ENCODE measurements at regions of chr3 and their contacts with region 1.

Region 1: GRCh38 chr3:16906682-16907081 is 21.9 kb downstream of the PLCL2 start:
- DNase-seq: peak in 1 of 6 donors; percentile 62
- ATAC-seq: peak; percentile 74 to 96 (median 89)
- H3K4me3 ChIP-seq: no peak overlapping the region
- H3K27ac ChIP-seq: peak overlapping the region in 2 of 4 donors; percentile 43 to 68
- H3K4me1 ChIP-seq: peaks cover 11 to 33% (median 27%) of the 10 kb centered on the region in 3 donors
- H3K27me3 ChIP-seq: no peaks in the 10 kb centered on the region
- CTCF ChIP-seq: no peak

Region 2: DNA sequence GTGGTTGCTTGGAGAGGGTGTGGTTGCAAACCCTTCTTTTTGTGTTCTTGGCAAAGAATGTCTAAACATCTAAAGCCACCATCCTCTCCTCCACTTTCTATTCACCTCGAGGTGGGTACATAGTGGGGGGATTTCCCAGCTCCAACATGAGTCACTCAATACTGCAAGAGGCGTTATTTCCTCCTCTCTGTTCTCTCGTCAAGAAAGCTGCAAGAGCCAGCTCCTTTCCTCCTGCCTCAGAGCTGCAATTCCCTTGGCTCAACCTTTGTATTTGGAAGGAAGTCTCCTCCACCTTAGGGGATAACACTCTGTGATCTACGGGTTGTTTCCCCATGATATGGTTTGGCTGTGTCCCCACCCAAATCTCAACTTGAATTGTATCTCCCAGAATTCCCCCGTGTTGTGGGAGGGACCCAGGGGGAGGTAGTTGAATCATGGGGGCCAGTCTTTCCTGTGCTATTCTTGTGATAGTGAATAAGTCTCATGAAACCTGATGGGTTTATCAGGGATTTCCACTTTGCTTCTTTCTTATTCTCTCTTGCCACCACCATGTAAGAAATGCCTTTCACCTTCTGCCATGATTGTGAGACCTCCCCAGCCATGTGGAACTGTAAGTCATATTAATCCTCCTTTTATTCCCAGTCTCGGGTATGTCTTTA is 116.5 kb after region 1 on chr3:
- intact Hi-C with region 1: loop called in 1 of 3 experiments (anchors 10 kb)
- DNase-seq: no peak
- ATAC-seq: peak in 2 of 4 donors; percentile 27 to 68
- H3K4me3 ChIP-seq: no peak overlapping the region
- H3K27ac ChIP-seq: no peak overlapping the region
- H3K4me1 ChIP-seq: peaks cover 0 to 6% (median 3%) of the 10 kb centered on the region in 3 donors
- H3K27me3 ChIP-seq: no peaks in the 10 kb centered on the region
- CTCF ChIP-seq: no peak

Measured in pancreas (tissue), 10 donors.